ENCODE measurements at regions of chr18 and their contacts with region 1.

Region 1: GRCh38 chr18:6885992-6886796 is 156.7 kb downstream of the ARHGAP28 start:
- DNase-seq: peak; percentile 74

Region 2: GRCh38 chr18:6543330-6543908 is 342.8 kb before region 1 on chr18:
- in situ Hi-C with region 1: loop called (anchors 10 kb)
- DNase-seq: peak; percentile 76

Region 3: DNA sequence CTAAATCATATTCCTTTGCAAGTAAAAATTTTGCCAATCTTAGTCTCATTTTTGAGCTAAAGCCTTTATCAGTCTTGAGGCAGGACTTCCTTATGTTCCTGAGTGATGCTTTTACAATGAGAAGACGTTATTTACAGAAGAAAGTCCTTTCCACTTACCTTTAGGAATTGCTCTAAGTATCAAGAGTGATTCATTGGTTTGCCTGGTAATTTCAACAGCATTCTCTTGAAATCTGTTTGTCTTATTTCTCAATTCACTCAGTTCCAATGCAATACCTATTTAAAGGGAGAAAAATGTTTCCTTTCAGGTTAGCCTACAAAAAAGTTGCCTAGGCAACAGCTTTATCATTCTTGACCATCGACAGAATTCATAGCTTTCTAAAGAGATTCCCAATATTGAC is 94.2 kb after region 1 on chr18:
- in situ Hi-C with region 1: no loop called
- DNase-seq: no peak

Region 4: DNA sequence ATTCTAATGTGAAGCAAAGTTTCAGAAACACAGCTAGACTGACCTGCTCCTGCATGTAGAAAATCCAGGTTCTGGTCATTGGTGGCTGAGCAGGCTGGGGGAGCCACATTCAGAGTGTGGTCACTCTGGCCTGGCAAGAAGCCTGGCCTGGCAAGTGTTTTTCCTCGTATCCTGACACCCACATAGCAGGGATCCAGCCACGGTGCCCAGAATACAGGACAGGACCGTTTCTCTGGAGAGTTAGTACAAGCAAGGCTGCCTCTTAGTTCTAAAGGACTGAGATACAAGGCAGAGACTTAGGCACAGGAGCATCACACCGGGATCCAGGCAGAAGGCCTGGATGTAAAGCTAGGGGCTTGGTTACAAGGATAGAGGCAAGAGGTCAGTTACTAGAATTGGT is 236.2 kb after region 1 on chr18:
- in situ Hi-C with region 1: no loop called
- DNase-seq: no peak